CD4-positive, alpha-beta T cell (primary cell): ENCODE measurements at regions of chr12 and their contacts with region 1.

Region 1: GRCh38 chr12:109713187-109713984 is at the start of gene FAM222A:
- DNase-seq: peak; percentile 94 to 99 (median 98)
- ATAC-seq: peak; percentile 93
- H3K4me3 ChIP-seq: peak within 1 kb of the TSS; percentile 56
- H3K4me3 Mint-ChIP-seq: peak within 1 kb of the TSS; percentile 84
- H3K27ac ChIP-seq: no peak within 1 kb of the TSS
- H3K27ac Mint-ChIP-seq: peak within 1 kb of the TSS; percentile 30
- H3K4me1 ChIP-seq: peaks cover 9% of the 10 kb centered on the region
- H3K4me1 Mint-ChIP-seq: peaks cover 5% of the 10 kb centered on the region
- H3K27me3 ChIP-seq: peaks cover 13 to 39% of the 10 kb centered on the region in 2 experiments
- H3K27me3 Mint-ChIP-seq: peaks cover 71% of the 10 kb centered on the region
- CTCF ChIP-seq: no peak
- total RNA-seq, gene FAM222A: 1.1 to 1.7 TPM

Region 2: DNA sequence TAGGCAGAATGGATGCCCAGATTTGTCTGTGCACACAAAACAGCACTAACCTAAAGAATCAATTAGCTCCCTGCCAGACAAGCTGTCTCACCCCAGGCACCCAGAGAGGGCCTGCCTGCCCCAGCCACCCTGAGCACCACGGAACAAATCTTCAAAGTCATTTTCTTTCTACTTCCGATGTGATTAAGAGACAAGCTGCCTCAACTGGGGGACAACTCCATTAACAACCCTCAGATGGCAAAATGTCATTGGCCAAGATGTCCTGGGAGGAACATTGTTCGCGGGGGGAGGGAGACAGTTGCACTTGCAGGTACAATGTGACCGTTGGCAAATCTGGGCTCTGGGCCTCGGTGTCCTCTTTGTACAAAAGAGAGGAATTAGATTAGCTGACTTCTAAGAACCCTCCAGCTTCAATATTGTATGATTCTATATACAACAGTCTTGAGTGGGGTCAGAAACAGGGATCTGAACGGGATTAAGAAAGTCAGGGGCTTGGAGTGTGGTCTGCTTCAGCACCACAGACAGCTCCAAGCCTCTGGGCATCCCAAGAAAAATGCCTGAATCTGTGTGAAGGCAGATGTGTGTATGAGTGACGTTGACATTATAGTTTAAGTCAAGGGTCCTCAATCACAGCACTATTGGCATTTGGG is 1331.5 kb before region 1 on chr12:
- CTCF ChIA-PET with region 1: no interaction called
- POLR2A ChIA-PET with region 1: no interaction called
- intact Hi-C with region 1: no loop called
- DNase-seq: no peak
- ATAC-seq: no peak
- H3K4me3 ChIP-seq: no peak overlapping the region
- H3K4me3 Mint-ChIP-seq: no peak overlapping the region
- H3K27ac ChIP-seq: no peak overlapping the region
- H3K27ac Mint-ChIP-seq: no peak overlapping the region
- H3K4me1 ChIP-seq: no peaks in the 10 kb centered on the region
- H3K4me1 Mint-ChIP-seq: no peaks in the 10 kb centered on the region
- H3K27me3 ChIP-seq: no peaks in the 10 kb centered on the region
- H3K27me3 Mint-ChIP-seq: peaks cover 19% of the 10 kb centered on the region
- CTCF ChIP-seq: no peak

Region 3: DNA sequence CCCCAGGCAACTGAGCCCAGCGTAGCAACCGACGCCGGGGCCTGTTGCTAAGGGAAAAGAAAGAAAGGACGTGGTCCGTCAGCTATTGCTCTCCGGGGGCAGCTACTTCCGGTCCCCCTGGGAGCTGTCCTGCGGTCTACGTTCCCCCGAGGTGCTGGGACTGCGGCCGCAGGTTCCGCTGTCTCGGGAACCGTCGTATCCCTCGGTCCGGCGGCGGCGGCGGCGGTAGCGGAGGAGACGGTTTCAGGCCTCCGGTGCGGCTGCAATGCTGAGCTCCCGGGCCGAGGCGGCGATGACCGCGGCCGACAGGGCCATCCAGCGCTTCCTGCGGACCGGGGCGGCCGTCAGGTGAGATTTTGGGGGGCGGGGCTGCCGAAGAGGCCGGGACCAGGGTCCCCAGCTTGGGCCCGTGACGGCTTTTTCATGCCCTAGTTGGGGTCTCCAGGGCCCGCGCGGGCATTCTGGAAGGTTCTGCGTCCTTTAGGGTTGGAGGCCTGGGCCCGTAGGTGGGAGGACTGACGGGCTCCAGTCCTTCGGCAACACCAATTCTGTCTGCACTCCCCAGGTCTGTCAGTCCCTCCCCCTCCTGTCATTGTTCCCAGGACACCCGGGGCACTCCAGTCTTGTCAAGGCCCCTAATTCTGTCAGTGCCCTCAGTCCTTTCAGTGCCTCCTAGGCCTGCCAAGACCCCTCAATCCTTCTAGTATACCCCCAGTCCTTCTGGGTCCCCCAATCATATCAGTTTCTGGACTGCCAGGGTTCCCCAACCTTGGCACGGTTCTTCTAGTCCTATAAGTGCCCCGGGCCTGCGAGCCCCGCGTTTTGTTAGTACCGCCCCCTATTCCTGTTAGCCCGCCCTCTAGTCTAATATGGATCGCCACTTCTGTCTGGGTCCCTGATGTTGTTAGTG is 660.7 kb before region 1 on chr12 and contains the start of gene USP30:
- CTCF ChIA-PET with region 1: no interaction called
- POLR2A ChIA-PET with region 1: no interaction called
- intact Hi-C with region 1: loop called in 1 of 2 experiments (anchors 5 kb)
- DNase-seq: peak; percentile 75 to 93 (median 81)
- ATAC-seq: peak; percentile 77
- H3K4me3 ChIP-seq: peak within 1 kb of the TSS; percentile 92
- H3K4me3 Mint-ChIP-seq: peak within 1 kb of the TSS; percentile 98
- H3K27ac ChIP-seq: peak within 1 kb of the TSS; percentile 87
- H3K27ac Mint-ChIP-seq: peak within 1 kb of the TSS; percentile 86
- H3K4me1 ChIP-seq: peaks cover 23% of the 10 kb centered on the region
- H3K4me1 Mint-ChIP-seq: peaks cover 13% of the 10 kb centered on the region
- H3K27me3 ChIP-seq: no peaks in the 10 kb centered on the region
- H3K27me3 Mint-ChIP-seq: no peaks in the 10 kb centered on the region
- CTCF ChIP-seq: no peak
- total RNA-seq, gene USP30: 21.8 to 23.0 TPM

Region 4: DNA sequence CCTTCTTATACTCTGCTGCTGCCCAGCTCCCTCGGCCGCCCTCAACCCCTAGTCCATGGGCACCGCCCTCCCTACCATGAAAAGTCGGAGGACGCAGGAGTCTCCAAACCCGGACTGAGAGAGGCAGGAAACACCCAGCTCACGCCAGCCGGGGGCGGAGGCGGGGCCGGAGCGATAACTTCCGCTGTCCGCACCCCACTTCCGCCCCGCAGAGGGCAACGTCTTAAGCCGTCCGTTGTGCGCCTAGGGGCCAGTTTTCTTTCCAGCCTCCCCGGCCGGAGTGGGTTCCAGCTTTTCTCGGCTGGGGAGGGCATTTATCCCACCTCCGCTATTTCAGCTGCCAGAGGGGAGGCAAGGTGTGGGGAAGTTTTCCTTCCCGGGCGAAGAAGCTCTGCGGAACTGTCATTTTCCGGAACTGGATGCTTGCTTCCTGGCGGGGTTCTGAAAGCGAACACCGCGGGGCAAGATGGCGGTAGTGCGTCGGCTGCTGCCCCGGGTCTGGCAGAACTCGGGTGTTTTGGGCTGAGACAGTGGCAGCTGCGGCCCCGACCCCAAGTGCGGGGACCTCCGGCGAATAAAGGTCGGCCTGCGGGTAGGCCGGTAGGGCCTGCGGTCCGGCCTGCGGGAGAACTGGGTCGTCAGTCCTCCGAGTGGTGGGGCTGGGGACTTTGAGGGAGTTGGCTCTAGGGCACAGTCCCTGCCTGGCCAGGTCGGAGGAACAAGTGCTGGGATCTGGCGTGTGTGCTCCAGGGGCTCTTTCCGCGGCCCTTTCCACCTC is 236.0 kb before region 1 on chr12 and contains the starts of genes KCTD10 and UBE3B:
- CTCF ChIA-PET with region 1: no interaction called
- POLR2A ChIA-PET with region 1: no interaction called
- intact Hi-C with region 1: loop called in 1 of 2 experiments (anchors 1 kb)
- DNase-seq: peak; percentile 74 to 93 (median 82)
- ATAC-seq: peak; percentile 91
- H3K4me3 ChIP-seq: peak within 1 kb of the TSS; percentile 90
- H3K4me3 Mint-ChIP-seq: peak within 1 kb of the TSS; percentile 98
- H3K27ac ChIP-seq: peak within 1 kb of the TSS; percentile 73 to 87
- H3K27ac Mint-ChIP-seq: peak within 1 kb of the TSS; percentile 92
- H3K4me1 ChIP-seq: peaks cover 30% of the 10 kb centered on the region
- H3K4me1 Mint-ChIP-seq: peaks cover 50% of the 10 kb centered on the region
- H3K27me3 ChIP-seq: no peaks in the 10 kb centered on the region
- H3K27me3 Mint-ChIP-seq: no peaks in the 10 kb centered on the region
- CTCF ChIP-seq: no peak
- total RNA-seq, gene KCTD10: 24.2 to 26.1 TPM
- total RNA-seq, gene UBE3B: 17.2 to 19.9 TPM

Region 5: DNA sequence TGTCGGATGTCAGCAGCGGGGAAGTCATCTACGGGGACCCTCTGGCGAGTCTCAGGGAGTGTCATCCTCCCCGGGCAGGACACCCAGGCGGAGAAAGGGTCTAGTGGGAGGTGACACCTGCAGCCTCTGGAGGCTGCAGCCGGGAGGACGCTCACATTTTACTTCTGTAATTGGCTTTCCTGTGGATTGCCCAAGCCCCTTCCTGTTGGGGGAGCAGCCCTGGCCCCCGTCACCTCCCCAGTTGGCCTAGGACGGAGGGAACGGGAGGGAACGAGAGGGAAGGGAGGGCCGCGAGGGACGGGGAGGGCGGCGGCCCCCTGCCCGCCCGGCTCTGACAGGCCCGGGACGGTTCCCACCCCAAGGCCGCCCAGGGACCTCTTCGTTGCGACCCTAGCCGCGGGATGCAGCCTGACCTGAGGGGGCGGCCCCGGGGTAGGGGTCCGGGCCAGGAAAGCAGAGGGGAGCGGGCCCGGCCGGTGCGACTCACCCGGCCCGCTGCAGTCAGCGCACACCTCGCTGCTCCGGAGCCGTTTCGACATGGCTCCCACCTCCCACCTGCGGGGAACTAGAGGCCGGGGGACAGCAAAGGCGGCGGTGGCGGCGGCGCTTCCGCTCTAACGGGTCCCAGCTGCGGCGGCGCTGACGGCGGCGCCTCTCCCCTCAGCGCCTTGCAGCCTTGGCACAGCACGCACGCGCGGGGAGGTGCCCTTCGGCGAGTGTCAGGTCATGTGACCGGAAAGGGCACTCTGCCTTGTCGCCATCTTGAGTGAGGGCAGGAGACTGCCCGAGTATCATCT is 282.5 kb after region 1 on chr12 and contains the start of gene GIT2:
- CTCF ChIA-PET with region 1: no interaction called
- POLR2A ChIA-PET with region 1: no interaction called
- intact Hi-C with region 1: loop called in 1 of 2 experiments (anchors 5 kb)
- DNase-seq: peak; percentile 88 to 98 (median 94)
- ATAC-seq: peak; percentile 80
- H3K4me3 ChIP-seq: peak within 1 kb of the TSS; percentile 95
- H3K4me3 Mint-ChIP-seq: peak within 1 kb of the TSS; percentile 97
- H3K27ac ChIP-seq: peak within 1 kb of the TSS; percentile 85 to 92
- H3K27ac Mint-ChIP-seq: peak within 1 kb of the TSS; percentile 94
- H3K4me1 ChIP-seq: peaks cover 50% of the 10 kb centered on the region
- H3K4me1 Mint-ChIP-seq: peaks cover 71% of the 10 kb centered on the region
- H3K27me3 ChIP-seq: no peaks in the 10 kb centered on the region
- H3K27me3 Mint-ChIP-seq: no peaks in the 10 kb centered on the region
- CTCF ChIP-seq: no peak
- total RNA-seq, gene GIT2: 68.6 to 70.7 TPM

Region 6: GRCh38 chr12:110280779-110281548 is 567.6 kb after region 1 on chr12 and contains the start of gene ATP2A2:
- CTCF ChIA-PET with region 1: no interaction called
- POLR2A ChIA-PET with region 1: no interaction called
- intact Hi-C with region 1: loop called in 1 of 2 experiments (anchors 10 kb)
- DNase-seq: peak; percentile 80 to 98 (median 88)
- ATAC-seq: peak; percentile 87
- H3K4me3 ChIP-seq: peak within 1 kb of the TSS; percentile 82
- H3K4me3 Mint-ChIP-seq: peak within 1 kb of the TSS; percentile 97
- H3K27ac ChIP-seq: peak within 1 kb of the TSS; percentile 40 to 77
- H3K27ac Mint-ChIP-seq: peak within 1 kb of the TSS; percentile 91
- H3K4me1 ChIP-seq: peaks cover 23% of the 10 kb centered on the region
- H3K4me1 Mint-ChIP-seq: peaks cover 46% of the 10 kb centered on the region
- H3K27me3 ChIP-seq: no peaks in the 10 kb centered on the region
- H3K27me3 Mint-ChIP-seq: no peaks in the 10 kb centered on the region
- CTCF ChIP-seq: no peak
- total RNA-seq, gene ATP2A2: 113 to 117 TPM